CD4-positive, alpha-beta memory T cell (primary cell): ENCODE measurements at regions of chr2 and their contacts with region 1.

Region 1: GRCh38 chr2:12507295-12507694 is 209.4 kb upstream of the TRIB2 start:
- DNase-seq: peak; percentile 45 to 75 (median 48)
- H3K4me3 ChIP-seq: peak overlapping the region in 1 of 2 donors; percentile 21
- H3K4me3 Mint-ChIP-seq: peak overlapping the region; percentile 7 to 79 (median 72)
- H3K27ac ChIP-seq: no peak overlapping the region
- H3K27ac Mint-ChIP-seq: peak overlapping the region; percentile 70 to 93 (median 84)
- H3K4me1 ChIP-seq: peaks cover 77% of the 10 kb centered on the region
- H3K4me1 Mint-ChIP-seq: peaks cover 77 to 100% (median 86%) of the 10 kb centered on the region in 4 donors
- H3K27me3 ChIP-seq: no peaks in the 10 kb centered on the region
- H3K27me3 Mint-ChIP-seq: no peaks in the 10 kb centered on the region

Region 2: DNA sequence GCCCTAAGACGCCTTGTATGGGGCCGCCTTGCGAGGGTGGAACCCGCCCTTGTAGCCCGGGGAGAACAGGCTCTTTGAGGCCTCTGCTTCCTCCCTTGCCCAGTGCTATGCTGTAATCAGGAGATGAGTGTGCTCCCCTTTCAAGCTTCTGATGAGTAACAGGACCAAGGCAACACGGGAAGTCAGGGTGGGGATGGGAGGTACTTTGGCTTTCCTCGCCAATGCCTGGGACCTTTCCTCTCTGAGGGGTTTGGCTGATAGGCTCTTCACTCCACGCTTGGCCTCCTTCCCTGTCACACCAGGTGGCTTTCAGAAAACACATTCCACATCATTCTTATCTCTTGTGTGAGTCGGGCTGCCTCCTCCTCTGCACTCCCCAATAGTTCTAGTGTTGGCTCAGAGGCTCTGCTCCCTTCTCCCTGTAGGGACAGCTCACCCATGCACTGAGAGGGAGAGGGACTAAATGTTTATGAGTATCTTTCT is 14.2 kb before region 1 on chr2:
- CTCF ChIA-PET with region 1: interaction called, 52 read pairs
- POLR2A ChIA-PET with region 1: interaction called, 164 read pairs
- intact Hi-C with region 1: no loop called
- DNase-seq: peak in 2 of 5 donors; percentile 23 to 52
- H3K4me3 ChIP-seq: no peak overlapping the region
- H3K4me3 Mint-ChIP-seq: peak overlapping the region in 7 of 8 donors; percentile 34 to 78 (median 67)
- H3K27ac ChIP-seq: no peak overlapping the region
- H3K27ac Mint-ChIP-seq: peak overlapping the region; percentile 80 to 95 (median 94)
- H3K4me1 ChIP-seq: peaks cover 77% of the 10 kb centered on the region
- H3K4me1 Mint-ChIP-seq: peaks cover 64 to 79% (median 71%) of the 10 kb centered on the region in 4 donors
- H3K27me3 ChIP-seq: no peaks in the 10 kb centered on the region
- H3K27me3 Mint-ChIP-seq: no peaks in the 10 kb centered on the region